ENCODE measurements at regions of chr3 and their contacts with region 1.

Region 1: DNA sequence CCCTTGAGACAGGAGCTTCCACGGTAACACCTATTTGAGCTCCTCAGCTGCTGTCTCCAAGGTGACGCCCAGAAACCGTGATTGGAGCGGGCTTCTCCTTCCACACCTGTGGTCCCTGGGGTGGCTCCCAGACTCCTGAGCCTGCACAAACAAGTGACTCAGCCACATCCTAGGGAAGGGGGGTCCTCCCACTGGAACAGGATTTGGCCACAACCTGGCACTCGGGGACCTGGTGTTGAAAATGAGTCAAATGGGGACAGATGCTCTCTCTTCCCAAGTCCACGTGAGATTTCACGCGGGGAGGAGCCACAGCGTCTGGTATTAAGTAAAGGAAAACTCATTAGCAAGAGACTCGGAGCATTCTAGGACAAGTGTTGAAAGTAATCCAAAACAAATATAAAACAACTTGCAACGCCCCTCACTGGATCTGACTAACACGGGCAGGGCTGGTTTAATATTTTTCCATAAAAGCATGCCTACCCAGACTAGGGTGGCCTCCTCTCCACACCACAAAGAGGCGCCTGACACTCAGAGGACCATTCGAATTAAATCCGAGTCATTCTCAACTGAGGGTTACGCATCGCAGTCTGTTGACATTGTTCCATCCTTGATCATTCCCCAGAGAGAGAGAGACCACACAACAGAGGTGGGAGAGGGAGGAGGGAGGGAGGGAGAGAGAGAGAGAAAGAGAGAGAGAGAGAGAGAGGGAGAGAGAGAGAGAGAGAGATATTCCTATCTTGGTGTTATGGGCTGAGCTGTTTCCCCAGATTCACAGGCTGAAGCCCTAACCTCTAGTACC is 74.4 kb downstream of the MGLL start:
- DNase-seq: peak; percentile 86 to 91 (median 88)
- ATAC-seq: peak; percentile 80 to 90
- H3K4me3 ChIP-seq: no peak overlapping the region
- H3K27ac ChIP-seq: peak overlapping the region; percentile 89
- H3K4me1 ChIP-seq: peaks cover 31% of the 10 kb centered on the region
- H3K27me3 ChIP-seq: no peaks in the 10 kb centered on the region

Region 2: GRCh38 chr3:127697551-127698240 is 50.2 kb before region 1 on chr3:
- intact Hi-C with region 1: loop called in 2 of 4 experiments (anchors 5 kb)
- DNase-seq: peak; percentile 90 to 96 (median 94)
- ATAC-seq: peak; percentile 79 to 85
- H3K4me3 ChIP-seq: no peak overlapping the region
- H3K27ac ChIP-seq: peak overlapping the region; percentile 85
- H3K4me1 ChIP-seq: peaks cover 33% of the 10 kb centered on the region
- H3K27me3 ChIP-seq: no peaks in the 10 kb centered on the region

Measured in right cardiac atrium (tissue), 5 donors.